Endothelial cell of umbilical vein (primary cell): ENCODE measurements at regions of chr3 and their contacts with region 1.

Region 1: GRCh38 chr3:190384241-190384863 is 3.6 kb upstream of the CLDN16 start:
- DNase-seq: peak; percentile 45
- H3K4me3 ChIP-seq: no peak overlapping the region
- H3K27ac ChIP-seq: no peak overlapping the region
- H3K4me1 ChIP-seq: peaks cover 12% of the 10 kb centered on the region
- H3K27me3 ChIP-seq: no peaks in the 10 kb centered on the region
- CTCF ChIP-seq: peak; percentile 8 to 12
- POLR2A ChIP-seq: no peak

Region 2: DNA sequence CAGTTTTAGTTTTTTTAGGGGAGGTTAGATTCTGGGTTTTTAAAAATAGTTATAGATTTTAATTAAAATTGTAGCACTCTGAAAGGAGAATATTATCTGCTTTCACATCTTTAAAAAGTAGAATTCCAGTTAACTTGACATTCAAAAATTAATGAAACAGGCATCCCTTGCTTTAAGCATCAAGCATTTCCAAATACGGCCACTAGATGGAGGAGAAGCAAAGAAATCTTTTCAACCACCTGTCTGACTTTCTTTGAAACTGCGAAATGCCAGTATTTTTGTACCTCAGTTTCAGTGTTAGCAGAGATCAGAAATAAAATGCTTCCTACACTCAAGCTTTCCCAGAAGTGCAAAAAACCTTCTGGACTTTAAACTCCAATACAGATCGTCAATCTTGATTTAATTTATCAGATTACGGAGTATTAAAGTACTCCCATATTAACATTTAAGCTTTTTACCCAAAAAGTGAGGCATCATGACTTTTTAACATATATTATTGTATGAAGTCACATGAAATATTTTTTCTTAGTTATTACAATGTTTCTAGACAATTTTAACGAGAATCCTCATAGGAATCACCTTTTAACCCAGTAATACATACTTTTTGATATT is 417.0 kb before region 1 on chr3:
- CTCF ChIA-PET with region 1: interaction called, 26 read pairs
- POLR2A ChIA-PET with region 1: no interaction called
- dilution Hi-C with region 1: no loop called
- intact Hi-C with region 1: no loop called
- DNase-seq: peak; percentile 71
- H3K4me3 ChIP-seq: no peak overlapping the region
- H3K27ac ChIP-seq: no peak overlapping the region
- H3K4me1 ChIP-seq: no peaks in the 10 kb centered on the region
- H3K27me3 ChIP-seq: no peaks in the 10 kb centered on the region
- CTCF ChIP-seq: peak; percentile 58 to 63
- POLR2A ChIP-seq: no peak

Region 3: GRCh38 chr3:190003681-190004123 is 380.6 kb before region 1 on chr3:
- CTCF ChIA-PET with region 1: no interaction called
- POLR2A ChIA-PET with region 1: no interaction called
- dilution Hi-C with region 1: no loop called
- intact Hi-C with region 1: no loop called
- DNase-seq: peak; percentile 86
- H3K4me3 ChIP-seq: no peak overlapping the region
- H3K27ac ChIP-seq: peak overlapping the region; percentile 82
- H3K4me1 ChIP-seq: peaks cover 22% of the 10 kb centered on the region
- H3K27me3 ChIP-seq: no peaks in the 10 kb centered on the region
- CTCF ChIP-seq: no peak
- POLR2A ChIP-seq: peak; percentile 49

Region 4: GRCh38 chr3:190205739-190206138 is 178.6 kb before region 1 on chr3:
- CTCF ChIA-PET with region 1: interaction called, 10 read pairs
- POLR2A ChIA-PET with region 1: no interaction called
- dilution Hi-C with region 1: no loop called
- intact Hi-C with region 1: no loop called
- DNase-seq: no peak
- H3K4me3 ChIP-seq: no peak overlapping the region
- H3K27ac ChIP-seq: no peak overlapping the region
- H3K4me1 ChIP-seq: no peaks in the 10 kb centered on the region
- H3K27me3 ChIP-seq: peaks cover 0 to 2% of the 10 kb centered on the region in 2 experiments
- CTCF ChIP-seq: no peak
- POLR2A ChIP-seq: no peak

Region 5: GRCh38 chr3:190339130-190339529 is 45.2 kb before region 1 on chr3:
- CTCF ChIA-PET with region 1: interaction called, 5 read pairs
- POLR2A ChIA-PET with region 1: no interaction called
- dilution Hi-C with region 1: no loop called
- intact Hi-C with region 1: loop called (anchors 1 kb)
- DNase-seq: peak; percentile 72
- H3K4me3 ChIP-seq: no peak overlapping the region
- H3K27ac ChIP-seq: peak overlapping the region; percentile 70
- H3K4me1 ChIP-seq: peaks cover 21% of the 10 kb centered on the region
- H3K27me3 ChIP-seq: no peaks in the 10 kb centered on the region
- CTCF ChIP-seq: no peak
- POLR2A ChIP-seq: no peak

Region 6: DNA sequence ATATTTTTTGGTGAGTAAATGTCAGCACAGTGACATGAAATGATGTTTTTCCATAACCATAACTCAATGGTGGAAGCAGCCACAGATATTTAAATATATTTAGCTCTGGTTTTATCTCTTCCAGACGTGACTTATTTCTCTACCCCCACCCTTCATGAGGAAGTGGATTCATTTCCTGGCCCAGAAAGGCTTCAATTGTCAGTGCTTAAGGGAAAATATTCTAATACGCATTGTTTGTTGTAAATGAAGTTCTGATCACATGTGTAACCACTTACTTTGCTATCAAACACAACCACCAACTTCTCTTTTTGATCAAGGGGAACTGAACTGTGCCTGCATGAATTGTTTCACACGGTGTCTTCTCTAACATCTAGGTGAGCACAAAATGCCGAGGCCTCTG is 17.6 kb after region 1 on chr3:
- CTCF ChIA-PET with region 1: interaction called, 12 read pairs
- POLR2A ChIA-PET with region 1: no interaction called
- dilution Hi-C with region 1: no loop called
- intact Hi-C with region 1: loop called (anchors 1 kb)
- DNase-seq: peak; percentile 77
- H3K4me3 ChIP-seq: no peak overlapping the region
- H3K27ac ChIP-seq: peak overlapping the region; percentile 61
- H3K4me1 ChIP-seq: peaks cover 13% of the 10 kb centered on the region
- H3K27me3 ChIP-seq: no peaks in the 10 kb centered on the region
- CTCF ChIP-seq: no peak
- POLR2A ChIP-seq: no peak